Left cardiac atrium (tissue), 4 donors: ENCODE measurements at regions of chr6 and their contacts with region 1.

Region 1: DNA sequence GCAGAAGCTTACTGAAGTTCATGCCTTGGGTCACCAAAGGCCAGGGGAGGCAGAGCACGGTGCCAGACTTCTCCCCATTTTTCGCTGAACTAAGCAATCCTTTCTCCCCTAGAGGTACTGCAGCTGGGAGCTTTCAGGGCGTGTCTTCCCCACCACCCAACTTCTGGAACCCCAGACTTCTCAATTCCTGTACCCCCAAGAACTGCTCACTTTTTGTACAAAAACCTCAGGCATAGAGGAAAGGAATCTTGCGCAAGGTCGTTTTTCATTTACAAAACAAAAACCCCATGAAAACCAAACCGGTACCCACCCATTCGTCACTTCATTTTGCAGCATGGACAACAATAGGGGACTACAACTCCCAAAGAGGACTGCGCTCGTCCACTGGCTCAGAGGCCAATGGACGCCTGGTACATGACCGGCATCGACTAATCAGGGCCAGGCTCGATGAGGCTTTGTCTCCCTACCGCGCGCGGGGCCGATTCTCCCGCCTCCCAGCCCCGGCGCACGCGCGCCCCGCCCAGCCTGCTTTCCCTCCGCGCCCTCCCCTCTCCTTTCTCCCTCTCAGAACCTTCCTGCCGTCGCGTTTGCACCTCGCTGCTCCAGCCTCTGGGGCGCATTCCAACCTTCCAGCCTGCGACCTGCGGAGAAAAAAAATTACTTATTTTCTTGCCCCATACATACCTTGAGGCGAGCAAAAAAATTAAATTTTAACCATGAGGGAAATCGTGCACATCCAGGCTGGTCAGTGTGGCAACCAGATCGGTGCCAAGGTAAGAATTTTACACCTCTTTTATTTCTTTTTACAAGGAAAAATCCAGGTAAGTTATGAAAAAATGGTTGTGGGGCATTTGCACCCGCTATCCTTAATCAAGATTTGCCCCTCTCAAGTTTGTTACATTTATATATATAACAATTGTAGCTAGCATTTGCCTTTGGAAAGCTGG is at the start of gene TUBB:
- DNase-seq: peak; percentile 97
- ATAC-seq: peak; percentile 77 to 82
- total RNA-seq, gene TUBB: 276 to 303 TPM

Region 2: GRCh38 chr6:30520522-30520921 is 199.5 kb before region 1 on chr6:
- intact Hi-C with region 1: no loop called
- DNase-seq: no peak
- ATAC-seq: no peak

Region 3: DNA sequence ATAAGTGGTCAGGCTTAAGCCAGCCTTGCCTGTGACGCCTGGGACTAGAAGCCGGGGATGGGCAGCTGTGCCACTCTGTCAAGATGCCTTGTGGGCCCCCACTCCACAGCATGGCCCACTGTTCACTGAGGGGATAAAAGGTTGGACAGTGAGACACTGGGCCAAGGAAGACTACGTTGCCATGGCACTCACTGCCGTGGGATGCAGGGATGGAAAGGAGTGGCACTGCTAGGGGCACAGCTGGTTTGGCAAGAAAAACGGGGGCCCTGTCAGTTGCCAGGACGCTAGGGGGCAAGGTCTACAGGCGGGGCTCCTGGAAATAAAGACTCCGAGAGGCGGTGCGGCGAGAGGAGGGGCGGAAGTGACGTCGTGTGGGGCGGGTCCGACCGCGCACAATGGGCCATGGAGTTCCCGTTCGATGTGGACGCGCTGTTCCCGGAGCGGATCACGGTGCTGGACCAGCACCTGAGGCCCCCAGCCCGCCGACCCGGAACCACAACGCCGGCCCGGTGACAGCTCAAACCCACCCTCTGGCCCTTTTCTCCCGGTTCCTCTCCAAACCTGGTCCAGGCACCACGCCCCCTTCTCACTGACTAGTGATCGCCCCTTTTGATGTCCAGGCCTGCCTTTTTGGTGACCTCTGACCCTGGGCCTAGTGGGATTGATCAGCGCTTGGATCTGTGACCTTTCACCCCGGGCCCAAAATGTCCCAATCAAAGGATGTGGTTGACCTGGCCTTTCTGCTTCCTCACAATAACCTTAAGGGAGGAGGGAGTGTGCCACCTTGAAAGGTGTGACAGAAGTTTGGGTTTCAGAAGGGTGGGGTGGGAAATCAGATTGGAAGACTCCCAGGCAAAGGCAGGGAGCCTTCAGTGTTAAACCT is 93.3 kb before region 1 on chr6 and contains the start of gene ATAT1:
- intact Hi-C with region 1: loop called in 1 of 2 experiments (anchors 10 kb)
- DNase-seq: peak; percentile 92
- ATAC-seq: peak; percentile 97 to 99
- total RNA-seq, gene ATAT1: 2.7 to 3.8 TPM

Region 4: GRCh38 chr6:30678964-30679726 is 40.9 kb before region 1 on chr6:
- intact Hi-C with region 1: loop called (anchors 2 kb)
- DNase-seq: peak; percentile 89
- ATAC-seq: peak; percentile 63 to 80

Region 5: GRCh38 chr6:30700340-30700739 is 19.7 kb before region 1 on chr6:
- intact Hi-C with region 1: no loop called
- DNase-seq: no peak
- ATAC-seq: peak; percentile 75 to 82

Region 6: DNA sequence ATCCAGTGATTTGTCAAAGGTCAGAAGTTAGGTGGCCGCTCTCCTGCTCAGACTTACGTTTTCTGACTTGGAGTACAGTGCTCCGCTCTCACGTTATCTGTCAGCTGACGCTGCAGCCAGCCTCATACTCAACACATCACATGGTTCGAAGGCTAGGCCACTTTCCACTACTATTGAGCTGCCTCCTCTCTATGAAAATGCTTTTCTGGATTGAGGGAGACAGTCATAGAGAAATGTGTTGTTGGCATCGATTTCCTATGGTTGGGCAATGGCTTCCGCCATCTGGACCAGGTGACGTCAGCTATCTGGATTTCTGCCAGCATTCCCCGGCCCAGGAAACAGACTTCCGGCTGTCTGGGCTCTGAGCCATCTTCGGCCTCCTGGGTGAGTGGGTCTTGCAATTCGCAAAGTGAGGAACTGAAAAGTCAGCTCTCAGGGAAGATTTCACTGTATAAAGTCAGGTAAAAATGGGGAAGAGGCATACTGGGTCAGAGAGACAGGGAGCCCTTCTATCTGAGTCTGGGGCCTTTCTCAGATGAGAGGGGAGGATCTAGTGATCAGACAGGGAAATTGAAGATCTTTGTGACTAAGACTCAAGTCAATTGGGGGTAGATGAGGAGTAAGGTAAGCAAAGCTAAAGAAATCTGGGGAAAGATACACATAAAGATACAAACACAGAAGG is 61.8 kb after region 1 on chr6:
- intact Hi-C with region 1: no loop called
- DNase-seq: peak; percentile 97
- ATAC-seq: peak; percentile 89 to 91